Activated CD4-positive, alpha-beta T cell treated with anti-CD3 and anti-CD28 coated beads, Interleukin-2, amount 10 ng/mL, durations not matched to agents 7 days and 5 days (primary cell): ENCODE measurements at regions of chr17 and their contacts with region 1.

Region 1: GRCh38 chr17:59010026-59010425 is 96.7 kb downstream of the TRIM37 start:
- DNase-seq: no peak
- H3K4me3 Mint-ChIP-seq: no peak overlapping the region
- H3K27ac Mint-ChIP-seq: no peak overlapping the region
- H3K4me1 Mint-ChIP-seq: no peaks in the 10 kb centered on the region
- H3K27me3 Mint-ChIP-seq: no peaks in the 10 kb centered on the region

Region 2: GRCh38 chr17:58976541-58976940 is 33.5 kb before region 1 on chr17:
- CTCF ChIA-PET with region 1: no interaction called
- POLR2A ChIA-PET with region 1: interaction called, 10 read pairs
- DNase-seq: no peak
- H3K4me3 Mint-ChIP-seq: no peak overlapping the region
- H3K27ac Mint-ChIP-seq: no peak overlapping the region
- H3K4me1 Mint-ChIP-seq: no peaks in the 10 kb centered on the region
- H3K27me3 Mint-ChIP-seq: no peaks in the 10 kb centered on the region